ENCODE measurements at regions of chr12 and their contacts with region 1.

Region 1: GRCh38 chr12:4276524-4277204 is 3.1 kb downstream of the CCND2 start:
- DNase-seq: peak; percentile 67 to 95 (median 83)
- ATAC-seq: peak; percentile 21 to 38 (median 31)
- H3K4me3 ChIP-seq: peak overlapping the region in 1 of 2 donors; percentile 96
- H3K4me3 Mint-ChIP-seq: peak overlapping the region; percentile 92 to 98 (median 96)
- H3K27ac ChIP-seq: no peak overlapping the region
- H3K27ac Mint-ChIP-seq: peak overlapping the region; percentile 90 to 97
- H3K4me1 ChIP-seq: peaks cover 26 to 81% of the 10 kb centered on the region in 2 experiments
- H3K4me1 Mint-ChIP-seq: peaks cover 61 to 67% (median 67%) of the 10 kb centered on the region in 3 donors
- H3K27me3 ChIP-seq: no peaks in the 10 kb centered on the region
- H3K27me3 Mint-ChIP-seq: no peaks in the 10 kb centered on the region

Region 2: DNA sequence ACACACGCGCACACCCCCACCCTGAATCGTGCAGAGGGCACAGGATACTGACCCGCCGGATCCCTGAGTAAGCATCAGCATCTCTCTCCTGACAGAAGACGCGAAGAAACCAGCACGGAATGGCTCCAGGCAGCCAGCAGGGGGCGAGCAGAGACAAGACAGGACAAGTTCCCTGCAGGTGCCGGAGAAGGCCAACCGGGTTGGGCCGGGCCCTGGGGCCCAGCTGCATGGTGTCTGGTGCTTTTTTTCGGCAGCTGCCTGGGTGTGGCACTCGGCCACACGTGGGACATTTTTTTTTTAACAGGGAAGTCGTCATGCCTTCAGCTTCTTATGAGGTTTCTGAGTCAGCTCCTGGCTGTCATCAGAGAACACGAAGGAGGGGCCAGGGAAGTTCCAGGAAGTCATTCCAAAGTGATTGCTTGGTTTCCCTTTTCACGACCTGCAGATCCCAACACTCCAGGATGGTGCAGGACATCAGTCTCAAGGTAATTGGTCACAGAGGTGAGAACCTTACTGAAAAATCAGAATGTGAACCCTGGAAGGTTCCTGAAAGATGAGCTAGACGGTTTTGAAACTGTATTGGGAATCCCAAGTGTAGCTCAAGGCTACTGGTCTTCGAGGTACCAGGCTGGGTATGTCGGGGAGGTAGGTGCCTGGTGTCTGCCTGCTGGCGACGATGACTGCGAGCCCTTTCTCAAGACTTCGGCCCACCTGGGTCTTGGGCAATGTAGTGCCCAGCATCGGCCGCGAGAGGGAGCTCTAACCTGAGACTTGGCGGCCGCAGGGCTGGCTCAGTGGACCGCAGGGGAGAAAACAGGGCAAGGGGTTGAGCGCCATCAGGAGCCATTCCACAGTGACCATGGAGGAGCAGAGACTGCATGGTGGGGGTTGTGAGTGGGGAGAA is 976.5 kb before region 1 on chr12:
- CTCF ChIA-PET with region 1: interaction called in 1 of 2 experiments, 13 read pairs
- POLR2A ChIA-PET with region 1: no interaction called
- DNase-seq: peak; percentile 50 to 82 (median 73)
- ATAC-seq: peak; percentile 78 to 87 (median 80)
- H3K4me3 ChIP-seq: peak overlapping the region; percentile 10 to 36
- H3K4me3 Mint-ChIP-seq: peak overlapping the region; percentile 67 to 72 (median 67)
- H3K27ac ChIP-seq: no peak overlapping the region
- H3K27ac Mint-ChIP-seq: peak overlapping the region; percentile 39 to 60
- H3K4me1 ChIP-seq: peaks cover 0 to 14% of the 10 kb centered on the region in 2 experiments
- H3K4me1 Mint-ChIP-seq: peaks cover 12 to 13% (median 12%) of the 10 kb centered on the region in 3 donors
- H3K27me3 ChIP-seq: peaks cover 0 to 56% of the 10 kb centered on the region in 2 experiments
- H3K27me3 Mint-ChIP-seq: peaks cover 8 to 24% of the 10 kb centered on the region in 2 donors

Region 3: DNA sequence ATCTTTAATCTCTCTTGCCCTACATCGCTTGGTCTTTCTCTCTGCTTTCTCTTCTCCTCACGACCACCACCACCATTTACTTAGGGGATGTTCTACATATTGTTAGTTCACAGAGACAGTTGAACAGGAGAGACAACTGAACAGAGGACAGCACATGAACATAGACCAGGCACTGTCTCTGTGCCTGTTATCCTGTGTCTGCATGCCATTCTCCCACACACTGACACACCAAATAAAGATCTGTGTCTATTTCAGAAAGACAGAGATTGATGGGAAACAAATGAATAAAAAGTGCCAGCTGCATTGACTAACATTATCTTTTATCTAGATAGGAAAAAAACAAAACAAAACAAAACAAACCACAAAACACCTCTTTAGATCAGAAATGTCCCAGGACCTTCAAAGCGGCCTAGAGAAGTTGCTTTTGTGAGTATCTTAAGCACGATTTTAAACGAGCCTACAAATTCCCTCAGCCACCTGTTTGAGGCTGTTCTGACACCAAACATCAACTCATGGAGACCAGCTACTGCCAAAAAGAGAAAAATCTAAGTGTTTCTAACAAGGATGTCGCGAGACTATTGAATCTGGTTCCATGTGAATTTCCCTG is 325.8 kb before region 1 on chr12:
- CTCF ChIA-PET with region 1: interaction called in 1 of 2 experiments, 5 read pairs
- POLR2A ChIA-PET with region 1: interaction called, 4 to 10 read pairs
- DNase-seq: peak in 12 of 35 experiments; percentile 16 to 55 (median 30)
- ATAC-seq: peak; percentile 34 to 62 (median 42)
- H3K4me3 ChIP-seq: no peak overlapping the region
- H3K4me3 Mint-ChIP-seq: peak overlapping the region; percentile 22 to 69 (median 29)
- H3K27ac ChIP-seq: peak overlapping the region; percentile 65
- H3K27ac Mint-ChIP-seq: peak overlapping the region; percentile 97 to 99
- H3K4me1 ChIP-seq: peaks cover 47 to 51% of the 10 kb centered on the region in 2 experiments
- H3K4me1 Mint-ChIP-seq: peaks cover 61 to 71% (median 71%) of the 10 kb centered on the region in 3 donors
- H3K27me3 ChIP-seq: no peaks in the 10 kb centered on the region
- H3K27me3 Mint-ChIP-seq: no peaks in the 10 kb centered on the region

Region 4: DNA sequence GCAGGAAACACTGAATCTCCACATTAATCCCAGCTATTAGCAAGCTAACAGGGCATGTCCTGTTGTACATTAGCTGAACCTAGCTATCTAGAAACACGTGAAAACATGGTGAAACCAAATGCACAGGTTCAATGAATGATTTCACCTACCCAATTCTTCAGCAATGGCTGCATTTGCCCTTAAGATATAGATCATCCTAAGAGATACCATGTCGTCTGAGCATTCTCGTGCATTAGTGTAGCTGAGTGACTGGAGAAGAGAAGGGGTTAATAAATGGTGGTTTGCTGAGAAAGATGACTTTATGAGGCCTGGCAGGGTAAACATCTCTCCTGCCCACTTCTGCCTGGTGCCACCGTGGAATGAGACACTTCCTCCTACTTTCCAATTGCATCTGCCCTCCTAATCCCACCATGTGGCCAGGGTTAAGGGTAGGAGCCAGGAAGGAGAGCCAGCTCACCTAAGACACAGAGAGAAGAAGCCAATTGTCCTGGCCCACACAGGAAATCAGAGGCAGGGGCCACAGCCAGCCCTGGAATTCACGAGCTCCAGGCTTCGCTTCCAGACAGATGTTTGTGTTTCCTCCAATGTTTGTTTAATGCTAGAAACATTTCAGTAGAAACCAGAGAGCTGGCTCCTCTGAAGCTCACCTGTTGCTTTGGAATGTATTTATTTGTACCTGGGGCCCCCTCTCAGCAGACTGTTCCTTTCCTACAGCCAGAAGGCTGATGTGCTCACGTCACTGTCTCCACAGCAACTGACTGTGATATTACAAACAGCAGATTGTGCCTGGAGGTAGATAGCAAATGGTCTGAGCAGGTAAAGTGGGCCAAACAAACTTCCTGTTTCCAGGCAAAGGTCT is 277.5 kb before region 1 on chr12:
- CTCF ChIA-PET with region 1: interaction called, 12 to 22 read pairs
- POLR2A ChIA-PET with region 1: no interaction called
- DNase-seq: peak in 19 of 35 experiments; percentile 7 to 52 (median 15)
- ATAC-seq: peak in 1 of 4 experiments; percentile 85
- H3K4me3 ChIP-seq: no peak overlapping the region
- H3K4me3 Mint-ChIP-seq: no peak overlapping the region
- H3K27ac ChIP-seq: no peak overlapping the region
- H3K27ac Mint-ChIP-seq: peak overlapping the region; percentile 11 to 66
- H3K4me1 ChIP-seq: peaks cover 9 to 21% of the 10 kb centered on the region in 2 experiments
- H3K4me1 Mint-ChIP-seq: peaks cover 21 to 47% (median 35%) of the 10 kb centered on the region in 3 donors
- H3K27me3 ChIP-seq: no peaks in the 10 kb centered on the region
- H3K27me3 Mint-ChIP-seq: no peaks in the 10 kb centered on the region

Region 5: DNA sequence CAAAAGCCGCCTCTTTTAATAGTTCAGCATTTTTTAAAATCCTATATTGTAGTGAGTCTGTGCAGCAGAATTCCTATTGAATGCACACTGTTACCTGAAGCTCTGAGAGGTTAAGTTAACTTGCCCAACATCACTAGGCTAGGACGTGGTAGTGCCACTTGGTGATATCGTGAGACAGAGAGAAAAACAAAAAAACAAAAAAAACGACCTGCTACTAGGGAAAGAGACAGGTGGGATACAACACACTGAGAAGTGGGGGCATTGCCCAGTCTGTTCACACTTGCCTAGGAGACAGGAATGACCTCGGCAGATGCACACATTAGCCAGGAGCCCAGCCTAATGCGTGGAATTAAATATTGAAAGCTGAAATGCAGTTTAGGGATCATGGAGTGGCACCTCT is 132.8 kb before region 1 on chr12:
- CTCF ChIA-PET with region 1: interaction called, 3 to 24 read pairs
- POLR2A ChIA-PET with region 1: interaction called, 3 read pairs
- DNase-seq: peak in 8 of 35 experiments; percentile 8 to 66 (median 26)
- ATAC-seq: peak; percentile 31 to 58 (median 36)
- H3K4me3 ChIP-seq: no peak overlapping the region
- H3K4me3 Mint-ChIP-seq: peak overlapping the region; percentile 19 to 83 (median 67)
- H3K27ac ChIP-seq: peak overlapping the region; percentile 83
- H3K27ac Mint-ChIP-seq: peak overlapping the region; percentile 83 to 97
- H3K4me1 ChIP-seq: peaks cover 13 to 67% of the 10 kb centered on the region in 2 experiments
- H3K4me1 Mint-ChIP-seq: peaks cover 55 to 88% (median 59%) of the 10 kb centered on the region in 3 donors
- H3K27me3 ChIP-seq: no peaks in the 10 kb centered on the region
- H3K27me3 Mint-ChIP-seq: no peaks in the 10 kb centered on the region

Region 6: DNA sequence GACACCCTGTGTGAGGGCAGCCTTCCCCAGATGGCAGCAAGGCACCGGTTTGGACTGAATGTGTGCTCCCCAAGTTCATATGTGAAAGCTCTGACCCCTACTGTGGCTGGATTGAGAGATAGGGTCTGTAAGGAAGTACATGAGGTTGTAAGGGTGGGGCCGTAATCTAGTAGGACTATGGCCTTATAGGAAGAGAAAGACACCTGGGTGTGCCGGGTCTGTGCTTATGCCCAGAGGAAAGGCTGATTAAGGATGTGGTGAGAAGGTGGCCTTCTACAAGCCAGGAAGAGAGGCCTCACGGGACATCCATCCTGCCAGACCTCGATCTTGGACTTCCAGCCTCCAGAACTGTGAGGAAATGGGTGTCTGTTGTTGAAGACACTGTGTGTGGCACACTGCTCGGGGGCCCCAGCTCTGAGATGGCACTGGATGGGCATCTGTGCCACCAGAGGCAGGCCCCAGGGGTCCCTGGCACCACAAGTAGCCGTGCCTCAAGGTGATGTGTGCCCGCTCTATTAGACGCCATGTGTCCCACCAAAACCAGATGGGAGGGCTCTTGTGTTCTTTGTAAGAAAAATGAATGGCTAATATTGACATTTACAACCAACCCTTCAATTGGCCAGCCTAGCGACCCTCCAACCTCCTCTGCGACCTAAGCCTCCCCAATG is 147.0 kb after region 1 on chr12:
- CTCF ChIA-PET with region 1: no interaction called
- POLR2A ChIA-PET with region 1: no interaction called
- DNase-seq: no peak
- ATAC-seq: no peak
- H3K4me3 ChIP-seq: no peak overlapping the region
- H3K4me3 Mint-ChIP-seq: no peak overlapping the region
- H3K27ac ChIP-seq: no peak overlapping the region
- H3K27ac Mint-ChIP-seq: no peak overlapping the region
- H3K4me1 ChIP-seq: no peaks in the 10 kb centered on the region
- H3K4me1 Mint-ChIP-seq: peaks cover 0 to 3% (median 0%) of the 10 kb centered on the region in 3 donors
- H3K27me3 ChIP-seq: no peaks in the 10 kb centered on the region
- H3K27me3 Mint-ChIP-seq: peaks cover 0 to 6% of the 10 kb centered on the region in 2 donors

Region 7: DNA sequence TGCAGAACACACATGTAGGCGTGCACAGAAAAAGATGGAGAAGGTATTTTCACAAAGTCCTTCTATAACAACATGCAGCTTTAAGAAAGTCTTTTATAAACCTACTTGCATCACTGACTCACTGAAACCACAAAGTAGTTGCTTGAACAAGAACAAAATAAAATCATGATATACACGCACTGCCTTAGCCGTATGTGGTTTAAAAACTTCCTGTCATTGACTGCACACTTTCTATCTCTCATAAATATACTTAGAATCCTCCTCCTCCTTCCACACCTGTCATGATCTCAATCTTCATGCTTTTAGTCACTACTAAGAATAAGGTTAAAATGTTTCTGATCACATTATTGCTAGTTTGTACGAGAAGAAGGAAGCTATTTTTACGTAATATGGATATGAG is 230.2 kb after region 1 on chr12:
- CTCF ChIA-PET with region 1: interaction called in 1 of 2 experiments, 10 read pairs
- POLR2A ChIA-PET with region 1: no interaction called
- DNase-seq: peak in 13 of 35 experiments; percentile 6 to 71 (median 27)
- ATAC-seq: peak; percentile 98 to 99 (median 98)
- H3K4me3 ChIP-seq: no peak overlapping the region
- H3K4me3 Mint-ChIP-seq: peak overlapping the region; percentile 37 to 59 (median 46)
- H3K27ac ChIP-seq: peak overlapping the region; percentile 58
- H3K27ac Mint-ChIP-seq: peak overlapping the region; percentile 74 to 87
- H3K4me1 ChIP-seq: peaks cover 0 to 23% of the 10 kb centered on the region in 2 experiments
- H3K4me1 Mint-ChIP-seq: peaks cover 24 to 29% (median 28%) of the 10 kb centered on the region in 3 donors
- H3K27me3 ChIP-seq: no peaks in the 10 kb centered on the region
- H3K27me3 Mint-ChIP-seq: no peaks in the 10 kb centered on the region

Region 8: GRCh38 chr12:4562034-4562657 is 285.5 kb after region 1 on chr12 and contains the start of gene DYRK4:
- CTCF ChIA-PET with region 1: no interaction called
- POLR2A ChIA-PET with region 1: no interaction called
- DNase-seq: peak in 2 of 35 experiments; percentile 4 to 16
- ATAC-seq: no peak
- H3K4me3 ChIP-seq: no peak within 1 kb of the TSS
- H3K4me3 Mint-ChIP-seq: peak within 1 kb of the TSS in 2 of 3 donors; percentile 18 to 21
- H3K27ac ChIP-seq: no peak within 1 kb of the TSS
- H3K27ac Mint-ChIP-seq: no peak within 1 kb of the TSS
- H3K4me1 ChIP-seq: peaks cover 0 to 8% of the 10 kb centered on the region in 2 experiments
- H3K4me1 Mint-ChIP-seq: peaks cover 12 to 27% (median 20%) of the 10 kb centered on the region in 3 donors
- H3K27me3 ChIP-seq: peaks cover 0 to 6% of the 10 kb centered on the region in 2 experiments
- H3K27me3 Mint-ChIP-seq: peaks cover 11 to 21% of the 10 kb centered on the region in 2 donors
- total RNA-seq, gene DYRK4: 11.0 to 24.8 (median 17.6) TPM

Measured in T-cell (primary cell).